ENCODE measurements at regions of chr17 and their contacts with region 1.

Region 1: DNA sequence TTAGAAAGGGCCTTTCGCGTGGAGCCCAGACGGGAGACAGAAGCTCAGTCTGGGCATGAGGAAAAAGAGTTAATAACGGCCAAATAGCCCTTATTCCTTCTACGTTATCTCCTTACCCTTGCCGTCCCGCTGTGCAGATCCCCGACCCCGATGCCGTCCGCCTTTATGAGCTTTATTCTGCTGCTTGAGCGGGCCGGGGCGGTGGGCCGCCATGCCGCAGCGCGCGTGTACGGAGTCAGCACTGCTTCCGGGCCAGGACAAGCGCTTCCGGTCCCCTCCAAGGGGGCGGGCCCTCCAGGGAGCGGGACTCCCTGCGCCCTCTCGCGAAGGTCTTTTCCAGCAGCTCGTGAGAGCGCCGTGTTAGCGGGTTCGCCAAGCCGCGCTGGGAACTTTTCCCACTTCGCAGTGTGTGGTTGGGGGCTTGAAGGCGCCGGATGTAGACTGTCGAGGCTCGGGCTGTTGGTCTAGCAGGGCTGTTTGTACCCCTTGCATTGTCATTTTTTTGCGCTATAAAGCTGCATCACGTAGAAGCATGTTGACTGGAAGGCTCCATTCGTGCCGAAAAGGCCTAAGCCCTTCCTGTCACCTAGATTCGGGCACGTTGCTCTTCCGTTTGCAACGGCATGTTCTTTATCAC is at the start of gene TSR1:
- DNase-seq: peak; percentile 98

Region 2: DNA sequence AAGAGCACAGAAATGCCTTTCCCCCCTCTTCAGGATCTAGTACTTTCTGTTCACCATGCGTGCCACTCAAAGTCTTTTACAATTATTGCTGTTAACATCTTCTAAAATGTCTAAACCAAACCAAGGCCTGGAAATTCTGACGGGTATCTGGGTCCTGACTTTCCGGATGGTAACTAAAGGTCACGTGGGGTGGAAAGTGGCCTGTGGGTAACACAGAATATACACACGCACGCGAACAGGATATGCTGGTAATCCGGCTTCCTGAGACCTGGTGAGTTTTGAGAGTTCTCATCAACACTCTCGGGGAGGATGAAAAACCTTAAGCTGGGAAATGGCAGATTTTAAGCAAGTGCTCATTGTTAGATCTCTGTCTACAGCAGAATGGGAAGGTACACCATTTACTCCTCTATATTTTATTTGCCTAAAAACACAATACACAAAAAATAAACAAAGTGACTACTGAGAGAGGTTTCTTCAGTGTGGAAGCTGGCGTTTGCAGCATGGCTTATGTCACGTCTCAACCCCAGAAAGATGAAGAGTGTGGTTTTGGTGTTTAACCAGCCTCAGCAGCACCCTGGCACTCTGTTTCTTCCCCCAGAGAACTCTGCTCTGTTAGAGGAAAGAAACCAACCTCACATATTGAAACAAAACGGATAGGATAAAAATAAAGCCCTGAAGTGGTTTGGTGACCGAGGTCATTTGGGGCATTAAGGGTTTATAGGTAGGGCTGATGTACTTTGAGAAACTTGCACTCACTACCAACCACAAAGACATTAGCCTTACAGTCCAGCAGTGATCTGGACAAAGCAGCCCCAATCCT is 70.1 kb before region 1 on chr17:
- CTCF ChIA-PET with region 1: no interaction called
- POLR2A ChIA-PET with region 1: no interaction called
- DNase-seq: no peak

Region 3: DNA sequence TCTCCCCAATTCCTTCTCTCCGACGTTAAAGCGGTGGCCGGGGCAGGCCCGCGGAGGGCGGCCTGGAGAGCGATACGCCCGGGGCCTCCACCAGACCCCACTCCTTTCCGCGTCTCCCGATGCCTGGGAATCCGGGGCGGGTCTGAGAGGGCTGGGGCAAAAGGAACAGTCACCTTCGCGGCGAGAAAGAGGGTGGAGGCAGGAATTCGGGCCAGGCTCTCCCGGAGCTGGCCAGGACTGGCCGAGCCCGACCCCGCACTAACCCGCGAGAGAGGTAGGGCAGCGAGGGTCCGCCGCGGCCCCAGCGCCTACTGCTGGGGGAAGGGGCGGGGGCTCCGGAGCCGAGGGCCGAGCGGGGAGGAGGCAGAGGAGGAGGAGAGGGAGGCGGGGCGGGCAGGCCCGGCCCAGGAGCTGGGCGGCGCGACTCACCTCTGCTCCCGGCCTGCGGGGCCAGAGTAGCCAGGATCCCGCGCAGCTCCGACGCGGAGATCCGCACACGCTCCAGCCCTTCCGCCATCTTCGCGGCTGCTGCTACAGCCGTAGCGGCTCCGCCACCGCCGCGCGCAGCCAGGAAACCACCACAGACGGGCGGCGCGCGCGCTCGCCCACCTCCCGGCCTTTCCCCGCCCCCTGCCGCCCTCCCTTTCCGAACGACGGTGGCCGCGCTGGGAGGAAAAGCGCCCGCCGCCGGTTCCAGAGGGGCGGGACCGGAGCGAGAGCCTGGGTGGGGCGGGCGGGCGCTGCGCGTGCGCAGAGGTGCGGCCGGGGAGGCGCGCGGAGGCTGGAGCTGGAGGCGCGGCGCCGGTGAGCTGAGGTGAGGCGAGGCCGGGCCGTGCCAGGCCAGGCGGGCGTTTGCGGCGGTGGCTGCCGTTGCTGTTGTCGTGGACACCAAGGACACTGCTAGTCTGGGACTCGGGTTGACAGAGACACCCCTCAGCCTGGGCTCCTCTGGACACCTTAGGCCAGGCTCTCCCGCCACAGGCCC is 32.8 kb before region 1 on chr17 and contains the starts of genes SMG6 and SRR:
- CTCF ChIA-PET with region 1: no interaction called
- POLR2A ChIA-PET with region 1: interaction called, 26 read pairs
- DNase-seq: peak; percentile 96

Region 4: GRCh38 chr17:2309338-2310154 is 26.8 kb before region 1 on chr17:
- CTCF ChIA-PET with region 1: no interaction called
- POLR2A ChIA-PET with region 1: interaction called, 14 read pairs
- DNase-seq: no peak

Region 5: DNA sequence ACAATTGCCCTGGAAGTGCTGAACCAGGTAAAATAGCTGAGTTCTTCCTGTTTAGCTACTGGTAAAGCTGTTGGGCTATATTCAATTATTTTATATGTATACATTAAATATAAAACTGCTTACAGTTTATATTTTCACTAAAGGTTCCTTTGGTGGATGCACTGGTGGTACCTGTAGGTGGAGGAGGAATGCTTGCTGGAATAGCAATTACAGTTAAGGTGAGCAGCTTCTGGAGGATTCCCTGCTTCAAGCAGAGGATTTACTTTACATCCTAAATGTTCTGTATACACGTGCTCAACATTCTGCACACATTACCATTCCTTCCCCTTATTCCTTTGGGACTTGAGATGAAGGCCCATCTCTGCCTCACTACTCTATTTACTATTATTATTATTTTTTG is 14.9 kb before region 1 on chr17:
- CTCF ChIA-PET with region 1: no interaction called
- POLR2A ChIA-PET with region 1: interaction called, 17 read pairs
- DNase-seq: no peak

Region 6: DNA sequence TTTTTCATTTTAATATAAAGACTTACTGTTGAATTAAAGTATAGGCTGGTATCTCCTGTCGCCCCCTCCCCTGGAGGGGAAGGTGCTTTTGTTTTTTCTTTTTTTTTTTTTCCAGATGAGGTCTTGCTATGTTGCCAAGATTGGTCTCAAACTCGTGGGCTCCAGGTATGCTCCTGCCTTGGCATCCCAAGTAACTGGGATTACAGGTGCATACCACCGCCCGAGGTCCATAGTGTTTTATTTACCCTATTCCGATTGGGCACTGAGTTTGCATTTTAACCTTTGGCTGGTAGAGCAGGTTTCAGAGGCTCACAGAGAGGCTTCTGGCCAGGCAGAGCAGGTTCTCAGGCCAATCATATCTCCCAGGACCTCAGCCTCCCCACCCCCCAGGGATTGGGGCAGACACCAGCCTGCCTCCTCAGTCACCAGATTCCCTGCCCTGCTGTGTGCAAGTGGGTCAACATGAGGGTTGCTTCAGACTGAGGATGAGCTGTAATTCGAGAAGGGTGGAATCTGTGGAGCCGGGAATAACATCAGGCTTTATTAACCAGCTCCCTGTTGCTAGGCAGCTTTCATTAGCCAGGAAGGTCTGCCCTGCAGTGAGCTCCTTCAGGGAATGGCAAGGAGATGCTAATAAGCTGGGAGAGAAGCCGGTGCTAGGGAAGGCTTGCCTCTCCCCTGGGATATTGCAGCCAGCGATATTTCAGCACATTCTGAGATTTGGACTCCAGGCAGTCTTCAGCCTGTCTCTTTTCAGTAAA is 11.4 kb after region 1 on chr17:
- CTCF ChIA-PET with region 1: interaction called, 23 read pairs
- POLR2A ChIA-PET with region 1: interaction called, 42 read pairs
- DNase-seq: peak; percentile 65

Region 7: DNA sequence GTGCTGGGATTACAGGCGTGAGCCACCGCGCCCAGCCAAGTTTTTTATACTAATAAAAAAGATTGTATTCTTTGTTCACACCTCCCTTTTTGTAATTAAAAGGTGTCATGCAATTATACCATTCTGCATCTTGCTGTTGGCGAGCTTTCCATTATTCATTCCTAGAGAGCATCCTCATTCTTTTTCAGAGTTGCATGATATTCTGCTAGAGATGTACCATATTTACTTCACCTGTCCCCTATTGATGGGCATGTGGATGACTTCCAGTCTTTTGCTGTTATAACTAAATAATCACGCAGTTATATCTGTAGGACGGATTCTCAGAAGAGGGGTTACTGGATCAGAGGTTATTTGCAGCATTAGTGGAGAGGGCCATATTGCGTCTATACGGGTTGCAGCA is 18.0 kb after region 1 on chr17:
- CTCF ChIA-PET with region 1: interaction called, 23 read pairs
- POLR2A ChIA-PET with region 1: interaction called, 42 read pairs
- DNase-seq: no peak

Region 8: GRCh38 chr17:2427215-2427614 is 90.9 kb after region 1 on chr17:
- CTCF ChIA-PET with region 1: no interaction called
- POLR2A ChIA-PET with region 1: no interaction called
- DNase-seq: no peak